Vagina (tissue), 2 donors: ENCODE measurements at regions of chr1 and their contacts with region 1.

Region 1: DNA sequence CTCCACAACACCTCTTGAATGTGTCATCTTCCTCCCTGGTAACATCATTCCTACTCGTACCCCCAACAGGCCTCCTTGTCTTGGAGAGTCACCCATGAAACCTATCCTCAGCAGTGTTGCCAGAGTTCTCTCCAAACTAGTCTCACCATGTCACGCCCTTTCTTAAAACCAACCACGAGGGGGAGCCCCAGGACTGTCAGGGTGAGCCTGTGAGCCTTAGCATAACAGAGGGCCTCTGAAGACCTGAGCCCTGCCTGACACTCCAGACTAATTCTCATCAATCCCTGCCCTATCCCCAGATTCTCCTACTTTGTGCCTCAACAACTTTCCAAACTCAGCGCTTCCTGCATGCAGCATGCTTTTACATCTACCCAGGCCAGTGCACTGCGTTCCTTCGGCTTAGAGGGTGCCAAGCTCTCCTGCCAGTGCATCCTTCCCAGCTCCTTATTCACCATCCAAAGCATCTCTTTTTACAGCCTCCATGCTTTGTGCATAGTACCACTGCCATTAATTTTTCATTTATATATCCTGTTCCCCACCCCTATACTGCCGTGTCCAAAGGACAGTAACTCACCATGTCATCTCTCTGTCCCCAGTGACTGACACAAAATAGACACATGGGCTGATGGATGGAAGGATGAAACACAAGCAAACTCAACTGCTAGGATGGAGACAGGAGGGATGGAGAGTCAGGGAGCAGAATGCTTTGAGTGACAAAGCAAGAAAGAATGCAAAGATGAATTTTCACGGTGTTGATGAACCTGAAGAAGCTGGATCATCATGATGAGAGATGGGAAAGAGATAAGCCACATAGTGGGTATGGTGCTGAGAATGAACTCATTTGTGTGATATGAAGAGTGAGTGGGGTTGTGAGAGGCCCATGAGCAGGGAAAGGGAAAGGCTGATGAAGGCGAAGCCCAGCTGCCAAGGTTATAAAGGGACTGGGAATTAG is 34.0 kb downstream of the ZNF697 start:
- DNase-seq: no peak
- H3K4me3 ChIP-seq: no peak overlapping the region
- H3K27ac ChIP-seq: no peak overlapping the region
- H3K4me1 ChIP-seq: peaks cover 5% of the 10 kb centered on the region
- H3K27me3 ChIP-seq: no peaks in the 10 kb centered on the region
- CTCF ChIP-seq: peak; percentile 40 to 85 (median 83)
- POLR2A ChIP-seq: no peak

Region 2: DNA sequence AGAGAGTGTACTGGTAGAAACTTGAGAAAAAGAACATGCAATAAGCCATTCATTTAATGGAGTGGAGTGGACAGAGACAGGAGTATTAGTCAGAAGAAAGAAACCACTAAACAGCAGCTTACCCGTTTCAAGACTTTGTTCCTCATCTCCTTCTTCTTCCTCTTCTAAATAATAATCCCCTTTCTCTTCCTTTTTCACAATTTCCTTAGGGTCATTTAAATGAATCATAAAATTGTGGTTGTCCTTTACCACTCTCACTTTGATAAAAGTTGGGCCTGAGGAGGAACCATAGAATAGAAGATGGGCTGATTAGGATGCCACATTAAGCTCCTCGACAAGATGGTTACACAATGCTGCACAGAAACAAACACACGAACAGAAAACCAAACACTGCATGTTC is 1574.9 kb before region 1 on chr1:
- intact Hi-C with region 1: no loop called
- DNase-seq: no peak
- H3K4me3 ChIP-seq: no peak overlapping the region
- H3K27ac ChIP-seq: no peak overlapping the region
- H3K4me1 ChIP-seq: no peaks in the 10 kb centered on the region
- H3K27me3 ChIP-seq: no peaks in the 10 kb centered on the region
- CTCF ChIP-seq: no peak
- POLR2A ChIP-seq: no peak

Region 3: GRCh38 chr1:119544165-119544762 is 69.8 kb before region 1 on chr1:
- intact Hi-C with region 1: no loop called
- DNase-seq: no peak
- H3K4me3 ChIP-seq: no peak overlapping the region
- H3K27ac ChIP-seq: no peak overlapping the region
- H3K4me1 ChIP-seq: no peaks in the 10 kb centered on the region
- H3K27me3 ChIP-seq: no peaks in the 10 kb centered on the region
- CTCF ChIP-seq: no peak
- POLR2A ChIP-seq: no peak

Region 4: GRCh38 chr1:119662034-119662437 is 48.0 kb after region 1 on chr1:
- intact Hi-C with region 1: loop called (anchors 2 kb)
- DNase-seq: no peak
- H3K4me3 ChIP-seq: no peak overlapping the region
- H3K27ac ChIP-seq: no peak overlapping the region
- H3K4me1 ChIP-seq: peaks cover 17% of the 10 kb centered on the region
- H3K27me3 ChIP-seq: no peaks in the 10 kb centered on the region
- CTCF ChIP-seq: no peak
- POLR2A ChIP-seq: no peak